Activated CD8-positive, alpha-beta memory T cell treated with anti-CD3 and anti-CD28 coated beads, Interleukin-2, amount 10 ng/mL, durations not matched to agents 7 days and 5 days (primary cell): ENCODE measurements at regions of chr7 and their contacts with region 1.

Region 1: GRCh38 chr7:50229964-50230363 is 74.6 kb upstream of the IKZF1 start:
- DNase-seq: no peak
- ATAC-seq: no peak
- H3K4me3 Mint-ChIP-seq: no peak overlapping the region
- H3K27ac Mint-ChIP-seq: no peak overlapping the region
- H3K4me1 Mint-ChIP-seq: peaks cover 40% of the 10 kb centered on the region
- H3K27me3 Mint-ChIP-seq: no peaks in the 10 kb centered on the region

Region 2: DNA sequence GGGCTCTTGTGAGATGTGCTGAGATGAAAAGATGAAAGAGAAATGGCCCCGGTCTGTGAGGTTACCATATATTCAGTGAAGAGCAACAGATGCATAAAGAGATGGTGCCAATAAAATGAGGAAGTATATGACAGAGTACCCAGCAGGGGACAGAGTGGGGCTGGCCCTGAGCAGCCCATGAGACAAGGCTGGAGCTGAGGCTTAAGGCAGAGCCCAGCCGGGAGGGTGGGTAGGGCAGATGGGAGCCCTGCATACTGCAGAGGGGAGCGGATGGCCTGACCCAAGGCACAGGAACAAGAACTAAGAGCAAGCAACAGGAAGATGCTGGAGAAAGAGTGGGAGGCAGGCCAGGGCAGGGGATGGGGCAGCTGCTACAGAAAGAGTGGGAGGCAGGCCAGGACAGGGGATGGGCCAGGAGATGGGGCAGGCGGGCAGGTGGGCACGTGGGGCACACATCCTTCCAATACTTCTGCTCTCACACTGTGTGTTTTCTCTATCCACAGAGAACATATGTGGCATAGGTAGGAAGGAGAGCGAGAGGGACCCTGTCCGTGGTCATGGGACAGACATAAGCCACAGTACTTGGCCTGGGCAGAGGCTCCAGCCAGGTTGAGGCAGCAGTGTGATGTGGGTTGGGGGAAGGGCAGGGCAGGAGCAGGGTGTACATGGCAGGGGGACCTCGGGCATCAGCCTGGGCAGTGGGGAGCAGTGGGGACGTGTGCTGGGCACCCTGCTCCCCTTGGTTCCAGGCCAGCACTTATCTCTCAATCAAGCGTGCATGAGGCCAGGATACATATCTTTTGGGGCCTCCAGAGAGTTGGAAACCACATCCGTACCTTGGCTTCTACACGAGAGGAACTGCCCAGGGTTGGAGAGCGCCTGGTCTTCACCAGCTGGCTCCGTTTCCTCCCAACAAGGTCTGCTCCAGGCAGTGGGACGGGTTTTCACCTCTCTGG is 17.0 kb before region 1 on chr7:
- CTCF ChIA-PET with region 1: interaction called, 28 read pairs
- DNase-seq: peak; percentile 58
- ATAC-seq: peak; percentile 35
- H3K4me3 Mint-ChIP-seq: no peak overlapping the region
- H3K27ac Mint-ChIP-seq: peak overlapping the region; percentile 93
- H3K4me1 Mint-ChIP-seq: peaks cover 89% of the 10 kb centered on the region
- H3K27me3 Mint-ChIP-seq: no peaks in the 10 kb centered on the region

Region 3: DNA sequence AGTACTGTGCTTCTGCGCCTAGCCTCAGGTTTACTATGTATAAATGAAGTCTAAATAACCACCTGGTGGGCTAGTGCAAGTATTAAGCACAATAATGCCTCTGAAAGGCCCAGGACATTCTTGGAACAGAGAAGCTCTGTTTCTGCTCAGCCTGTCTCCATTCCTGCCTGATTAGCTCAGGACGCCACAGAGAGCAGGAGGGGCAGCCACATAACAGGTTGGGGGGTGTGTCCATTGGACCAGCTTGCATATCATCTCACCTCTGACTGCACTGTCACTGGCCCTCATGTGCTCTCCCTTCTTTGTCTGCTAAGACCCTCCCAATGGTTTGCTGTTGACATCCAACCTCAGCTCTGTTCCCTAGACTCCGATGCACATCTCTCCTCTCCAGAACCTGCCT is 21.8 kb after region 1 on chr7:
- CTCF ChIA-PET with region 1: interaction called, 10 read pairs
- DNase-seq: no peak
- ATAC-seq: no peak
- H3K4me3 Mint-ChIP-seq: no peak overlapping the region
- H3K27ac Mint-ChIP-seq: no peak overlapping the region
- H3K4me1 Mint-ChIP-seq: peaks cover 2% of the 10 kb centered on the region
- H3K27me3 Mint-ChIP-seq: no peaks in the 10 kb centered on the region

Region 4: DNA sequence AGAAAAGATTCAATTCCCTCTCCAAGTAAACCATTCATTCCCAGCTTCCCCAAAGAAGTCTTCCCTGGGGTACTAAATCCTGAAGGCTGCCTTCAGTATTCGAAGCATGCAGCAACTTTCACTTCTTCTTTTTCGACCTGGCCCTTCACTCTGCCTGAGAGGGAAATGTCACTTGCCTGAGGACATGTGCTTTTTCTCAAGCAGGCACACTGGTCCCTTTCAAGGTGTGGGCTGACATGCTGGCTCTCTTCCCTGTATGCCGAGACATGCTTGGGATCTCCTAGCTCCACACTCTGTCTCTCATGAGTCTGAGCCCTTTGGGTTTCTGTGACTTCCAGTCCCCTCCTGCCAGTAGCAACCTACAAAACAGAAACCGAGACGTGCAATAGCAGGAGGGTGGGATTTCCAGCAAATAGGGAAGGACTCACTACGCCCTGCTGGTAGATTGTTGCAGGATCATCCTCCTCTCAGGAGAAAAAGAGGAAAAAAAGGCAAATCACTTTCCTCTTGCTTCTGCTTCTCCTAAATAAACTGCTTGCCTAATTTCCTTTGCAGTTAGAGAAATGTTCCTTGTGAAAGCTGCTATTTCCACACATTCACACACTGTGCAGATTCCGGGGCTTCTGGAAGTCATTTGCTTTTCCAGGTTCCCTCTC is 186.7 kb after region 1 on chr7:
- CTCF ChIA-PET with region 1: no interaction called
- DNase-seq: no peak
- ATAC-seq: no peak
- H3K4me3 Mint-ChIP-seq: peak overlapping the region; percentile 43
- H3K27ac Mint-ChIP-seq: peak overlapping the region; percentile 52
- H3K4me1 Mint-ChIP-seq: peaks cover 21% of the 10 kb centered on the region
- H3K27me3 Mint-ChIP-seq: no peaks in the 10 kb centered on the region